ENCODE measurements at regions of chr4 and their contacts with region 1.

Region 1: DNA sequence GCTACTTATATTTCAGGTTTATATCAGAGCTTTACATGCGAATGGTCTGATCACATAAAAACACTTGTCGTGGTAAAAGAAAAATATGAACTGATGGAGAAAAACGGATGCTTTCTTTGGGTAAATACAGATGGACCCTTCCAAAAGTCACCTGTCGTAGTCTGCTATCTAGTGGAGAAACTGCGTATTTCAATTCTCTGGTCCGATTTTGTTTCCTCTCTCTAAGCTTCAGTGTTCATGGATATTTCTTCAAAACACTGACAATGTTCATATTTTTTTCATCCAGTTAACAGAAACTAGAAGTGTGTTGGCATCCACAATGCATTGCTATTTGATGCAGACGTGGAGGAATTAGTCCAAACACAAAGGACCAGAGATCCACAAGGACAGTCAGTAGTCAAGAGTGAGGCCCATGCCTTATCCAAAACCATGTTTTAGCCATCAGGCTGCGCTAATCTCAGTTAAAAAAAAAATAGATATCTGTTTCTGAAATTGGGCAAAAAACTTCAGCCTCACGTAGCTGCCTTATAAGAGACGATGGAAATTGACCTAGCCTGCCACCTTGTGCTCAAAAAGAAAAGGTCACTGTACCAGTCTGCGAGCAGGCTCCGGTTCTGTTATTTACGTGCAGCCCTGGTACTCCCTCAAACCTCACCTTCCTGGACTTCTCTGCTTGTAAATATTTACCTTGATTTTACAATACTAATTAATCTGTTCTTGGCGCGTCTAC is 16.0 kb downstream of the MEPE start:
- DNase-seq: no peak
- H3K4me3 ChIP-seq: peak overlapping the region in 1 of 4 experiments; percentile 46; a peak in 2 of 8 replicates
- H3K27ac ChIP-seq: no peak overlapping the region
- H3K4me1 ChIP-seq: peaks cover 0 to 12% (median 6%) of the 10 kb centered on the region in 4 experiments; a peak in 6 of 7 replicates
- H3K27me3 ChIP-seq: no peaks in the 10 kb centered on the region
- CTCF ChIP-seq: peak; percentile 38 to 69 (median 67)
- EP300 ChIP-seq: no peak
- POLR2A ChIP-seq: no peak
- RAD21 ChIP-seq: peak; percentile 77 to 82

Region 2: GRCh38 chr4:87353592-87353991 is 495.2 kb before region 1 on chr4:
- CTCF ChIA-PET with region 1: interaction called, 10 read pairs
- POLR2A ChIA-PET with region 1: no interaction called
- DNase-seq: peak; percentile 13 to 68
- H3K4me3 ChIP-seq: no peak overlapping the region
- H3K27ac ChIP-seq: no peak overlapping the region
- H3K4me1 ChIP-seq: no peaks in the 10 kb centered on the region; a peak in 2 of 7 replicates
- H3K27me3 ChIP-seq: no peaks in the 10 kb centered on the region
- CTCF ChIP-seq: peak; percentile 38 to 69 (median 69)
- EP300 ChIP-seq: no peak
- POLR2A ChIP-seq: no peak
- RAD21 ChIP-seq: peak; percentile 86 to 87

Region 3: GRCh38 chr4:87584222-87584908 is 264.4 kb before region 1 on chr4:
- CTCF ChIA-PET with region 1: no interaction called
- POLR2A ChIA-PET with region 1: no interaction called
- DNase-seq: no peak
- H3K4me3 ChIP-seq: no peak overlapping the region
- H3K27ac ChIP-seq: no peak overlapping the region
- H3K4me1 ChIP-seq: no peaks in the 10 kb centered on the region
- H3K27me3 ChIP-seq: no peaks in the 10 kb centered on the region
- CTCF ChIP-seq: no peak
- EP300 ChIP-seq: no peak
- POLR2A ChIP-seq: no peak
- RAD21 ChIP-seq: no peak

Region 4: GRCh38 chr4:87657525-87657924 is 191.3 kb before region 1 on chr4:
- CTCF ChIA-PET with region 1: interaction called, 12 read pairs
- POLR2A ChIA-PET with region 1: no interaction called
- DNase-seq: no peak
- H3K4me3 ChIP-seq: no peak overlapping the region
- H3K27ac ChIP-seq: no peak overlapping the region
- H3K4me1 ChIP-seq: peaks cover 0 to 5% (median 0%) of the 10 kb centered on the region in 4 experiments; a peak in 3 of 7 replicates
- H3K27me3 ChIP-seq: no peaks in the 10 kb centered on the region
- CTCF ChIP-seq: no peak
- EP300 ChIP-seq: no peak
- POLR2A ChIP-seq: no peak
- RAD21 ChIP-seq: no peak

Region 5: GRCh38 chr4:87832669-87833068 is 16.1 kb before region 1 on chr4 and contains the start of gene MEPE:
- CTCF ChIA-PET with region 1: interaction called, 93 read pairs
- POLR2A ChIA-PET with region 1: no interaction called
- DNase-seq: no peak
- H3K4me3 ChIP-seq: no peak within 1 kb of the TSS
- H3K27ac ChIP-seq: no peak within 1 kb of the TSS
- H3K4me1 ChIP-seq: no peaks in the 10 kb centered on the region
- H3K27me3 ChIP-seq: no peaks in the 10 kb centered on the region
- CTCF ChIP-seq: no peak
- EP300 ChIP-seq: no peak
- POLR2A ChIP-seq: no peak
- RAD21 ChIP-seq: no peak
- total RNA-seq, gene MEPE: not detected in 2 replicates

Region 6: DNA sequence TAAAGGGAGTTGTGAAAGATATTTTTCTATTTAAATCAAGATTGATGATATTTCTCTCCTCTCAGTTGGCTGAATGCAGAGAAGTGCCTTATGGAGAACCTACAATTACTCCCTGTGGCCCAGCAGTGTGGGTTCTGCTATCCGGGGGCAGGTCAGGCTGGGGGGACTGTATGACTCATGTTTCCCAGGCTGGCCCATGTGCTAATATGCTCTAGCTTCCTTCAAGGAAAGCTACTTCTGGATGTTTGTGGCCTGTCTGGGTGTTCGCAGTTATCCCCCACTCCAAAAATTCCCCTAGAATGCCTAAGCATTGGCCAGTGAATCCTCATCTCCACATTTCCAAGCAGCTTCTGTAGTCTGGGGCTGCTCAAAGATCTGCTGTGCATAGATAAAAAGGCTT is 67.8 kb after region 1 on chr4:
- CTCF ChIA-PET with region 1: interaction called, 8 read pairs
- POLR2A ChIA-PET with region 1: interaction called, 16 read pairs
- DNase-seq: no peak
- H3K4me3 ChIP-seq: no peak overlapping the region
- H3K27ac ChIP-seq: no peak overlapping the region
- H3K4me1 ChIP-seq: peaks cover 18 to 43% (median 32%) of the 10 kb centered on the region in 4 experiments
- H3K27me3 ChIP-seq: no peaks in the 10 kb centered on the region
- CTCF ChIP-seq: no peak
- EP300 ChIP-seq: no peak
- POLR2A ChIP-seq: no peak
- RAD21 ChIP-seq: no peak

Region 7: GRCh38 chr4:87967193-87967592 is 118.4 kb after region 1 on chr4:
- CTCF ChIA-PET with region 1: interaction called, 28 read pairs
- POLR2A ChIA-PET with region 1: no interaction called
- DNase-seq: no peak
- H3K4me3 ChIP-seq: no peak overlapping the region
- H3K27ac ChIP-seq: no peak overlapping the region
- H3K4me1 ChIP-seq: peaks cover 0 to 4% (median 2%) of the 10 kb centered on the region in 4 experiments; a peak in 2 of 7 replicates
- H3K27me3 ChIP-seq: no peaks in the 10 kb centered on the region
- CTCF ChIP-seq: no peak
- EP300 ChIP-seq: no peak
- POLR2A ChIP-seq: no peak
- RAD21 ChIP-seq: no peak